ENCODE measurements at regions of chr9 and their contacts with region 1.

Region 1: DNA sequence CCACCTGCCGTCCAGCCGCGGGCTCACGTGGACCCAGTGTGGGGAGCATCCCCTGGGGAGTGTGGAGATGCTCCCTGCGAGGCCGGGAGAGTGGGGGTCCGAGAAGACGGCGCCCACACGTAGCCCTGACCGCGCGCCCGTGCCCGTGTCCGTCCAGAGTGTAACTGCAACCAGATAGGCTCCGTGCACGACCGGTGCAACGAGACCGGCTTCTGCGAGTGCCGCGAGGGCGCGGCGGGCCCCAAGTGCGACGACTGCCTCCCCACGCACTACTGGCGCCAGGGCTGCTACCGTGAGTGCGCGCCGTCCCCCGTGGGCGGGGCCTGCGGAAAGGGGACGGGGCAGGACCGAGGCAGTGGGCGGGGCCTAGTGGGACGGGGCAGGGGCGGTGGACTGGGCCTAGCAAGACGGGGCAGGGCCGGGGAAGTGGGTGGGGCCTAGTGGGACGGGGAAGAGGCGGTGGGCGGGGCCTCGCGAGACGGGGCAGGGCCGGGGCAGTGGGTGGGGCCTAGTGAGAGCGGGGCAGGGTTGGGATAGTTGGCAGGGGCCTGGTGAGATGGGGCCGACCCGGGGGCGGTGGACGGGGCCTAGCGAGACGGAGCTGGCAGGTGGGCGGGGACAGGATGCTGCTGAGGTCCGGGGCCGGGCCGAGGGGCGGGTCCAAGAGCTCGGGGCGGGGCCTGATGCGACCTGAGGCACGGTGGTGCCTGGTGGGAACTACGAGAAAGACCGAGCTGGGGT is 79.1 kb downstream of the NTNG2 start:
- DNase-seq: peak; percentile 100
- ATAC-seq: peak; percentile 94
- H3K4me3 Mint-ChIP-seq: peak overlapping the region; percentile 81
- H3K27ac Mint-ChIP-seq: peak overlapping the region; percentile 78
- H3K4me1 Mint-ChIP-seq: peaks cover 7% of the 10 kb centered on the region
- H3K27me3 Mint-ChIP-seq: peaks cover 3% of the 10 kb centered on the region
- CTCF ChIP-seq: no peak

Region 2: GRCh38 chr9:131755541-131756198 is 485.3 kb before region 1 on chr9:
- CTCF ChIA-PET with region 1: interaction called, 33 read pairs
- POLR2A ChIA-PET with region 1: no interaction called
- intact Hi-C with region 1: loop called (anchors 5 kb)
- DNase-seq: peak; percentile 96
- ATAC-seq: peak; percentile 99
- H3K4me3 Mint-ChIP-seq: no peak overlapping the region
- H3K27ac Mint-ChIP-seq: no peak overlapping the region
- H3K4me1 Mint-ChIP-seq: peaks cover 16% of the 10 kb centered on the region
- H3K27me3 Mint-ChIP-seq: peaks cover 7% of the 10 kb centered on the region
- CTCF ChIP-seq: peak; percentile 76

Region 3: DNA sequence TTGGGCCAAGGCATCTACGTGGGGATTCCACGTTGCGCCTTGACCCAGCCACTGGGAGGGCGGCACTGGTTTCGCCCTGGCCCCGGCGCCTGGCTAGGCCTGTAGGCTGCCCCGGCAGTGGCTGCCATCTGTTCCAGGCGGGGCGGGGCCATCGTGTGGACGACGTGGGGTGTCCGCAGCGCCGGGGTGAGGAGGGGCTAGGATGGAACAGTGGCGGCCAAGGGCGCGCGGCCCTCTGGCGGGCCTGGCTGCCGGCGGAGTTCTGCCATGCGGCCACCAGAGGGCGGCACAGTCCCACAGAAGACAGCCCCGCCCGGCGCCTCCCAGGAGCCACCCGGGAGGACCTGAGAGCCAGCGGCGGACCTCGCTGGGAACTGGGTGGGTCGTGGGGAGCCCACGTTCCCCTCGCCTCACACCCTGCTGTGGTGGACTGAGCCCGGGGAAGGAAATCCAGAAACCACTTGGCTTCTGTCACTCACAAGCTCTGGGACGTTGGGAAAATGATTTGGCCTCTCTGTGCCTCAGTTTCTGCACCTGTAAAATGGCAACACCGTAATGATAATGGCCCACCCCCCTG is 478.5 kb before region 1 on chr9:
- CTCF ChIA-PET with region 1: interaction called, 33 read pairs
- POLR2A ChIA-PET with region 1: no interaction called
- intact Hi-C with region 1: loop called (anchors 5 kb)
- DNase-seq: peak; percentile 79
- ATAC-seq: peak; percentile 90
- H3K4me3 Mint-ChIP-seq: no peak overlapping the region
- H3K27ac Mint-ChIP-seq: no peak overlapping the region
- H3K4me1 Mint-ChIP-seq: peaks cover 11% of the 10 kb centered on the region
- H3K27me3 Mint-ChIP-seq: peaks cover 10% of the 10 kb centered on the region
- CTCF ChIP-seq: peak; percentile 97

Region 4: DNA sequence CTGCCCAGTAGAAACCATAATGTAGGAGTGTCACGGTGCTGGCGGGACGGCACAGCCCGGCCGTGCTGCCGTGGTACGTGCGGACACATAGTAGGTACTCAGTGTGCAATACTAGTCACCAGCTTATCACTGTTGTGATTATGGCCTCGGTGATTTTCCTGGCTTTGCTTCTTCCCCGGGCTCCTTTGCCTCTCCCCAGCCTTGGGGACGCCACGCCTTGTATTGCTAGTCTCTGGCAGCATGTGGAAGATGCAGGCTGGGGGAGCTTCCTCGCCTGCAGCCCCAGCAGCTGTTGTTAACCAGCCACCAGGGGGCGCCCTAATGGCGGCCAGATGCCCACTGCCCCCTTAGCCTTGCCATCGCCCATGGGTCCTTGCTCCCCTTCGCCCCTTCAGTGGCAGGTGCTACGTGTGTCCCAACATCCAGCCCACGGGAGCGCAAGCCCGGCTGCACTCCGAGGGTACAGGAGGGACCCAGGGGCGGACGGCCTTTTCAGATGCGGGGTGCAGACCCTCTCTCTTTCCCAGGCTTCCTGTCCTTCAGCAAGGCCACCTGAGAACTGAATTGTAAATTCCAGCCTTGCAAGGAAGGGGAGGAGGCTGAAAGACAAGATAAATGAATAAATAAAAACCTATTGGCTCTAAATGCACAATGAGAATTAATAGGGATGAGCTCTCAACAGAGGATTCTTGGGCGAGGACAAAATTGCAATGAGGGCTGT is 71.1 kb before region 1 on chr9:
- CTCF ChIA-PET with region 1: interaction called, 193 read pairs
- POLR2A ChIA-PET with region 1: interaction called, 3 read pairs
- intact Hi-C with region 1: loop called (anchors 5 kb)
- DNase-seq: peak; percentile 72
- ATAC-seq: peak; percentile 77
- H3K4me3 Mint-ChIP-seq: no peak overlapping the region
- H3K27ac Mint-ChIP-seq: no peak overlapping the region
- H3K4me1 Mint-ChIP-seq: no peaks in the 10 kb centered on the region
- H3K27me3 Mint-ChIP-seq: peaks cover 21% of the 10 kb centered on the region
- CTCF ChIP-seq: peak; percentile 96

Region 5: DNA sequence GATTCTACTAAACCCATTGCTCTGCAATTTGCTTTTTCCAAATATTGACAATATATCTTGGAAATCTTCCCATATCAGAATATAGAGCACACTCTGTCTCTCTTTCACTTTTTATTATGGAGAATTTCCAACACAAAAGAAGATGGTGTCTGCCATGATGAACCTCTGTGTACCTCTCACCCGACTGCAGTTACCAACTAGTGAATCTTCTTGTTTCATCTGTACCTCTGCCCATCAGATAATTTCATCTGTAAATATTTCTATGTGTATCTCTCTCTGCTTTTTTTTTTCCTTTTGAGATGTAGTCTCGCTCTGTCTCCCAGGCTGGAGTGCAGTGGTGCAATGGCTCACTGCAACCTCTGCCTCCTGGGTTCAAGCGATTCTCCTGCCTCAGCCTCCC is 16.3 kb before region 1 on chr9:
- CTCF ChIA-PET with region 1: interaction called, 10 read pairs
- POLR2A ChIA-PET with region 1: no interaction called
- intact Hi-C with region 1: no loop called
- DNase-seq: no peak
- ATAC-seq: no peak
- H3K4me3 Mint-ChIP-seq: no peak overlapping the region
- H3K27ac Mint-ChIP-seq: no peak overlapping the region
- H3K4me1 Mint-ChIP-seq: peaks cover 3% of the 10 kb centered on the region
- H3K27me3 Mint-ChIP-seq: peaks cover 2% of the 10 kb centered on the region
- CTCF ChIP-seq: no peak

Region 6: DNA sequence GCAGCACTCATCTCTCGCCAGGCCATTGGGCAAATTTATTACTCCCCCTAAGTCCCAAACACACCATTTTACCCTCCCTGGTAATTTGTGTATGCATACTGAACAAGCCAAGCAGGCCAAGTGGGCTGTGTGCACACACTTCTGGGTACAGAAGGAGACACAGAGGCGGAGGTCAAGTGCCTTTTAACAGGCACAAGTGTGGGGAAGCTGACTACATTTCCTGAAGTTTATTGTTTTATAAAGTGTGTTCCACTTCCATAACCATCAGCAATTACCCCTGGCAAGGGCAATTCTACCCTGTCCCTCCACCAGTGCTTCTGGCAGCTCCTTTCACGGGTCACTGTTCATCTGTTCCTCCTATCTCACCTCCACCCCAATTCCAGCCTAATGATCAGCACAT is 19.9 kb after region 1 on chr9:
- CTCF ChIA-PET with region 1: interaction called, 23 read pairs
- POLR2A ChIA-PET with region 1: interaction called, 3 read pairs
- intact Hi-C with region 1: no loop called
- DNase-seq: no peak
- ATAC-seq: no peak
- H3K4me3 Mint-ChIP-seq: no peak overlapping the region
- H3K27ac Mint-ChIP-seq: no peak overlapping the region
- H3K4me1 Mint-ChIP-seq: peaks cover 11% of the 10 kb centered on the region
- H3K27me3 Mint-ChIP-seq: no peaks in the 10 kb centered on the region
- CTCF ChIP-seq: no peak